ENCODE measurements at regions of chr1 and their contacts with region 1.

Region 1: GRCh38 chr1:236502885-236503639 is 20.7 kb upstream of the LGALS8 start:
- DNase-seq: peak; percentile 47
- H3K4me3 ChIP-seq: peak overlapping the region; percentile 31
- H3K27ac ChIP-seq: peak overlapping the region; percentile 82
- H3K27me3 ChIP-seq: no peaks in the 10 kb centered on the region
- CTCF ChIP-seq: no peak

Region 2: DNA sequence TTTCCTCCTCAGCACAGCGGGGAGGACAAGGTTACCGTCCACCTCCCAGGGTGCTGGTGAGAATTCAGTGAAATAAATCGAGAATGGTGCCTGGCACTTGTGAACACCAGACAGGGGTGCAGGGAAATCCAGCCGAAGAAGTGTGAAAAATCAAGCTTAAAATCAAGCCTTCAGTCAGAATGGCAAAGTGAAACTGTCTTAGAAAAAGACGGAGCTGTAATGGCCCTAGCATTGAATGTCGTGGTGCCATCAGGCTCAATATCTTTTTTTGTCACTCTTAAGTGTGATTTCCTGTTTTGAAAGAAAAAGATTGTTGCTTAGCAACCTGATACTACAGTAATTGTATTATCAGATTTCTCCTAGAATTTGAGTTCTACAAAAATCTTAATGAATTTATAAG is 86.9 kb before region 1 on chr1:
- CTCF ChIA-PET with region 1: no interaction called
- POLR2A ChIA-PET with region 1: no interaction called
- DNase-seq: no peak
- H3K4me3 ChIP-seq: no peak overlapping the region
- H3K27ac ChIP-seq: no peak overlapping the region
- H3K27me3 ChIP-seq: no peaks in the 10 kb centered on the region
- CTCF ChIP-seq: no peak

Region 3: DNA sequence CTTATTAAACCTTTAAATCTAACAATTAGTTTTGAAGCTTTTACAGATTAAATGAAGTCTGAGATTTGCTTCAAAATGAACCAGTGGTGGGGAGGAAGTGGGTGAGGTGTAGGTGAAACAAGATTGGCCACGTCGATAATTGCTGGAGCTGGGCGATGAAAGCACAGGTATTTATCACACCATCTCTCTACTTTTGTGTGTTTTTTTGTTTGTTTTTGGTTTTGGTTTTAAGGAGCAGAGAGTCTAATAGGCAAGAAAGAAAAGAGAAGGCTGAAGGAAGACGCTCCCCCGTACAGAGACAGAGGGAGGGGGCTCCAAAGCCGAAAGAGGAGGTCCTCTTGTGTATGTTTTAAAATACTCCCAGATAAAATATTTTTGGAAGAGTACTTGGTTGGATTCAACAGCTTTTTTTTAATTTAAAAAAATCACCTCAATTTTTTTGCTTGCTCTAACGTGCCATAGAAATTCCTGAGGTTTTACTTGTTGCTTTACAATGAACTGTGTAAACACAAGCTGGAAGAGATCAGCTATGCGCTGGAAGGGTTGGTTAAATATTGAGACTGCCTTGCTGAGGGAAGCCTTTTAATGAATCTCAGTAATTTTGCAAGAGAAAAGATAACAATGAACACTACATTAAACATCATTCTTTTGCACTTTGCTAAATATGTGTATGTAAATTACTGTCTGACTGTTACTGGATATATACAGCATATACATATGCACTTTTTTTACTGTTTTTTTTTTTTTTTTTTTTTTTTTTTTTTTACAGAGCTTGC is 14.1 kb after region 1 on chr1:
- CTCF ChIA-PET with region 1: no interaction called
- POLR2A ChIA-PET with region 1: interaction called, 11 read pairs
- DNase-seq: peak; percentile 70
- H3K4me3 ChIP-seq: no peak overlapping the region
- H3K27ac ChIP-seq: no peak overlapping the region
- H3K27me3 ChIP-seq: no peaks in the 10 kb centered on the region
- CTCF ChIP-seq: no peak

Measured in AG04450 (cell line).